ENCODE measurements at regions of chr3 and their contacts with region 1.

Region 1: DNA sequence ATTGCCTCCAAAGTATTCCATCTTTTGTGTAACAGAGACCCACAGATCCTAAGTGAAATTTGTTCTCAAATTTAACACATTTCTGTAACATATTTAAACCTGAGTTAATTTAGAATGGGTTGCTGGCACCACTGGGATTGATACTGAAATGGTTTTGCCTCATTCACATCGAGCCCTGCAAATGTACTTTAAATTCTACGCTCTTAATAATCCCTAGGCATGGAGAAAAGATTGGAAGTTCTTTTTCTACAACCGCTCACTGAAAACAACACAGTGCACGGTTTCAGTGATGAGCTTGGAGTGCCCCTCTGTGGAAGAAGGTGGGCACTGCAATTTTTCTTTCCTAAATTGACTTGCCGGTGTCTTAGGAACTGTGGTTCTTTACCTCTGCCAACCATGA is 109.9 kb upstream of the ATP11B start:
- DNase-seq: peak; percentile 88
- H3K4me3 Mint-ChIP-seq: peak overlapping the region; percentile 66
- H3K27ac Mint-ChIP-seq: peak overlapping the region; percentile 62
- H3K4me1 Mint-ChIP-seq: peaks cover 17% of the 10 kb centered on the region
- H3K27me3 Mint-ChIP-seq: no peaks in the 10 kb centered on the region
- CTCF ChIP-seq: peak; percentile 96

Region 2: DNA sequence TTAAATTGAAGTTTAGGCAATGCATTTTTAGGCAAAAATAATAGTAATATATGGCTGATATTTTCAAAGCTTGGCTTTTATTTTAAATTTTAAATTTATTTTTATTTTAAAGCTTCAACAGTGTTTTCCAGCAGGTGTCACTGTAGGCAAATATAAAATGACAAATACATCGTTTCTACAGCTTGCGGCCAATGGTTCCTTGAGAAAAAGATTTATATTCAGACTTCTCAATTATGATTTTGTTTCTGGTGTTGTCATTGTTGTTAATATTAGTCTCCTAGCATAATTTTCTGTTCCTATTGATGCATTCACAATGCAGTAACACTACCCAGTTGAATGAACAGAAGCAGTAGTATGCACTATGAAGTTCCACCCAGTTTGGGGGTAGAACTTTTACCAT is 1473.2 kb before region 1 on chr3:
- CTCF ChIA-PET with region 1: interaction called, 3 read pairs
- intact Hi-C with region 1: loop called (anchors 2 kb)
- DNase-seq: no peak
- H3K4me3 Mint-ChIP-seq: no peak overlapping the region
- H3K27ac Mint-ChIP-seq: no peak overlapping the region
- H3K4me1 Mint-ChIP-seq: no peaks in the 10 kb centered on the region
- H3K27me3 Mint-ChIP-seq: no peaks in the 10 kb centered on the region
- CTCF ChIP-seq: no peak

Region 3: DNA sequence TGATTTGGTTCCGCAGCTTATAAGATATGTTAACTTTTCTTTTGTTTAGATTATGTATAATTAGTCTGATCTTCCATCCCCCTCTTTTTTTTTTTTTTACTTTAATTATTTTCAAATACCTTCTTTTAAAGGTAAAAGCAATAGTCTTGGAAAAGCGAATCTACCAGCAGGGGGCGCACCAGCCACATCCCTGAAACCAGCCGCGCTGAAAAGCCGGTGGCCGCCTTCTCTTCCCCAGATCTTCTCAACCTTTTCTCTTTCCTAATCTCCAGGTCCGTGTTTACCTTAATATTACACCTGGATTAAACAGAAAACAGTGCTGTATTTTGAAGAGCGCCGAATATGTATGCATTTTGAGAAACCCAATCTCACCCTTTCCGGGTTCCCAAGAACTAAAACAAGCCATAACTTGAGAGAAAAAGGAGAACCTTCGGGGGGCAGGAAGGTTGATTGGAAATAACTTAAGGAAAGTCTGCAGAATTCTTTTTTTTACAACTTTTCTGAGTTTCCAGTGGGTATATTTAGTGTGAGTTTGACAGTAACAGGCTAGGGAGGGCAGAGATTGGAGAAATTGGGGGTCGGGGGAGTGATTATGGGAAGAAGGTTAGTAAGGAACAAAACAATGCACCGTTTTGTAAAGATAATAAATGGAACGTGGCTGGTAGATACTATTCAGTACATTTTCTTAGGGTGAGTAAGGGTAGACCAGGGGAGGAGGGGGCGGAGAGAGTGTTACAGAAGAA is 973.7 kb before region 1 on chr3:
- CTCF ChIA-PET with region 1: interaction called, 3 read pairs
- intact Hi-C with region 1: loop called (anchors 1 kb)
- DNase-seq: peak; percentile 92
- H3K4me3 Mint-ChIP-seq: peak overlapping the region; percentile 45
- H3K27ac Mint-ChIP-seq: peak overlapping the region; percentile 11
- H3K4me1 Mint-ChIP-seq: peaks cover 22% of the 10 kb centered on the region
- H3K27me3 Mint-ChIP-seq: peaks cover 11% of the 10 kb centered on the region
- CTCF ChIP-seq: peak; percentile 94

Region 4: DNA sequence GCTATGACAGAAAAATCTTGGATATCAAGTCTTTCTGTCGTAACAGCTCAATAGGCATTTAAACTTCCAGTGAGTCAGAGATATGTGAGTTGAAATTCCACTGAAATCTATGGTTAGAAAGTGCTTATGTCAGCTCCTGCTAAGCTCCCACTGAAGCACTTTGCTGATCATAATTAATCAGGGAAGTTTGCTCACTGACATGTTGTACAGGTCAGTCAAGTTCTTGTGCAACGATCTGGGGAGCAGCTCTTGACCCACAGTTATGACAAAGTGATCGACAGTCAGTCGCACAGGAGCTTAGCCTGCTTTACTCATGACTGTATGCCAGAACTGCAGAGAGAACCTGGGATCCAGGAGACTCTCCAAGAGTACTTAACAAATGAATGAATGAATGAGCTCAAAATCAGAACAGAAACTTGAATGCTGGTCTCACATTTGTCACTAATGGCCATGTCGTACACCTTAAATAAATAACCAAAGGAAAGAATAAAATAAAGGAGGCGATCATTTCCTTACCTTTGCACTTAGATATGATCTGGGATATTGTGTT is 518.1 kb before region 1 on chr3:
- CTCF ChIA-PET with region 1: no interaction called
- intact Hi-C with region 1: loop called (anchors 5 kb)
- DNase-seq: peak; percentile 88
- H3K4me3 Mint-ChIP-seq: peak overlapping the region; percentile 17
- H3K27ac Mint-ChIP-seq: peak overlapping the region; percentile 34
- H3K4me1 Mint-ChIP-seq: peaks cover 8% of the 10 kb centered on the region
- H3K27me3 Mint-ChIP-seq: no peaks in the 10 kb centered on the region
- CTCF ChIP-seq: no peak

Region 5: GRCh38 chr3:182389071-182389815 is 294.2 kb before region 1 on chr3:
- CTCF ChIA-PET with region 1: no interaction called
- intact Hi-C with region 1: loop called (anchors 5 kb)
- DNase-seq: peak; percentile 83
- H3K4me3 Mint-ChIP-seq: no peak overlapping the region
- H3K27ac Mint-ChIP-seq: peak overlapping the region; percentile 72
- H3K4me1 Mint-ChIP-seq: peaks cover 13% of the 10 kb centered on the region
- H3K27me3 Mint-ChIP-seq: no peaks in the 10 kb centered on the region
- CTCF ChIP-seq: no peak

Region 6: GRCh38 chr3:182618085-182618732 is 65.2 kb before region 1 on chr3:
- CTCF ChIA-PET with region 1: interaction called, 10 read pairs
- intact Hi-C with region 1: loop called (anchors 2 kb)
- DNase-seq: peak; percentile 57
- H3K4me3 Mint-ChIP-seq: no peak overlapping the region
- H3K27ac Mint-ChIP-seq: no peak overlapping the region
- H3K4me1 Mint-ChIP-seq: peaks cover 17% of the 10 kb centered on the region
- H3K27me3 Mint-ChIP-seq: no peaks in the 10 kb centered on the region
- CTCF ChIP-seq: peak; percentile 87

Region 7: DNA sequence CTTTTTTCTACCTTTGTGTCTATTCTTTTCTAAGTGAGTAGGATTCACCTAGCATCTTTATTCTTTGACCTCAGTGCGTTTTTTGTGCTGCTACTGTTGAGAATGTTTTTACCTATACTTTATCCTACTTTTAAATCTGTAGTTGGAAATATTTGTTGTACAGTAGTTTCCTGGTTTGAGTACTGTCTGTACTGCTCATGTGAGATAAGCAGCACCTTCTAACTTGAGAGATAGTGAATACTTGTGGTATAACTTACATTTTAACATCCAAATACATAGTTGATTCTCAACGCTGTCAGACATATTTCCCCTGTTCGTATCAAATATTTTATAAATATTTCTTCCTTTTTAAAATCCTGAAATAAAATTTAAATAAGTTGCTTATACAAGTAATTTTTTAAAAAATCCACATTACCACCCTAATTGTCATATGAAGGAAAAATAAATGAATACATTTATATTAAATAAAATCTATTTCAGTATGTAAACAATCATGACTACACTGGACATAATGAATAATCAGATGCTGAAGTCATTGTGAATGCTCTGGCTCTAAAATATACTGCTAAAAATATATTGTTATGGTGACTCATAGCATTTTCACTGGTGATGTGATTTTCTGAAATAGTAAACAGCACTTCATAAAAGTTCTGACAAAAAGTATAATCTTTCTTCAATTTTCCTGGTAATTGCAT is 127.3 kb after region 1 on chr3:
- CTCF ChIA-PET with region 1: no interaction called
- intact Hi-C with region 1: no loop called
- DNase-seq: no peak
- H3K4me3 Mint-ChIP-seq: no peak overlapping the region
- H3K27ac Mint-ChIP-seq: no peak overlapping the region
- H3K4me1 Mint-ChIP-seq: peaks cover under 1% of the 10 kb centered on the region
- H3K27me3 Mint-ChIP-seq: no peaks in the 10 kb centered on the region
- CTCF ChIP-seq: no peak